Right cardiac atrium (tissue), 5 donors: ENCODE measurements at regions of chr4 and their contacts with region 1.

Region 1: GRCh38 chr4:83252782-83253405 is 31.7 kb downstream of the COQ2 start:
- DNase-seq: peak; percentile 49 to 69 (median 60)
- ATAC-seq: peak; percentile 62 to 76
- H3K4me3 ChIP-seq: no peak overlapping the region
- H3K27ac ChIP-seq: no peak overlapping the region
- H3K4me1 ChIP-seq: no peaks in the 10 kb centered on the region
- H3K27me3 ChIP-seq: no peaks in the 10 kb centered on the region

Region 2: DNA sequence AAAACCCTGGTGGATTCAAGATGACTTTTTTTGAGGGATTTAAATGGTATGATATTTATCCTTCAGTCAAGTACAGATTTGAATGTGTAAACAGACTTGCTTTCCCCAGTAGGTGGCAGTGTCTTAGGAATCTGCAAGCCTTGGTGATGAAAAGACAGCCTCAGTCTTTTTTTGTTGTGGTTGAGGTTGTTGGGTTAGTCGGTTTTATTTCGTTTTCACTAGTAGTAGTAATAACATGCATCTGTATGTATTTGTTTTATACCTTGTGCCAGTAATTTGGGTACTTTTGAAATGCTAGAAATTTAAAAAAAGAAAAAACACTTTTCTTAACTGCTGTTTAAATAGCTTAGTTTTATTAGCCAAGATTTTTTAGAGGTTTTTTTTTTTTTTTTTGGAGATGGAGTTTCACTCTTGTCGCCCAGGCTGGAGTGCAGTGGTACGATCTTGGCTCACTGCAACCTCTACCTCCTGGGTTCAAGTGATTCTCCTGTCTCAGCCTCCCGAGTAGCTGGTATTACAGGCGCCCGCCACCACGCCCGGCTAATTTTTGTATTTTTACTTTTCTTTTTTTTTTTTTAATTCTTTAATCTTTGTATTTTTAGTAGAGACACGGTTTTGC is 178.7 kb before region 1 on chr4:
- intact Hi-C with region 1: loop called in 1 of 4 experiments (anchors 5 kb)
- DNase-seq: no peak
- ATAC-seq: peak; percentile 56 to 71
- H3K4me3 ChIP-seq: no peak overlapping the region
- H3K27ac ChIP-seq: no peak overlapping the region
- H3K4me1 ChIP-seq: no peaks in the 10 kb centered on the region
- H3K27me3 ChIP-seq: no peaks in the 10 kb centered on the region

Region 3: GRCh38 chr4:83083925-83084475 is 168.9 kb before region 1 on chr4:
- intact Hi-C with region 1: loop called in 2 of 4 experiments (anchors 5 to 10 kb)
- DNase-seq: peak in 2 of 3 donors; percentile 44 to 75
- ATAC-seq: peak; percentile 68 to 98
- H3K4me3 ChIP-seq: no peak overlapping the region
- H3K27ac ChIP-seq: peak overlapping the region; percentile 40
- H3K4me1 ChIP-seq: peaks cover 2% of the 10 kb centered on the region
- H3K27me3 ChIP-seq: no peaks in the 10 kb centered on the region

Region 4: DNA sequence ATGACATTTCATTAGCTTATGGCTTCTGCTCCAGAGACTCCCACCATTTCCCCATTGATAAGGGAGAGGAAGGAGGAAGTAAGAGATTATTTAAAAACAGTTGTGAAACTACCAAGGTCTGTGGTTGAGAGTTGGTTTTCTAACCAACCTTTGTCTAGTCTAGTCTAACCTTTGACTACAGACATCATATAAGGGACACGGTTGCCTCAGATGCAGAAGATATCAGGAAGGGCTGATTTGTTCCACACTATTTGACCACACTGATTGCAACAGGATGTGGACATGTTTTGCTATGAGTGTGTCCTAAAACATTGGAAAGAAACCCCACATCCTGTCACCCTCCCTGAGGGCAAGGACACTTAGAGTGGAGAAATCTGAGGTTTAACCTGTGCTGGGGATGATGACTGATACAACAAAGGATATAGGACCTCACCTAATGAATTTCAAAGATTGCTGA is 21.2 kb before region 1 on chr4:
- intact Hi-C with region 1: no loop called
- DNase-seq: no peak
- ATAC-seq: peak in 1 of 2 donors; percentile 49
- H3K4me3 ChIP-seq: no peak overlapping the region
- H3K27ac ChIP-seq: no peak overlapping the region
- H3K4me1 ChIP-seq: no peaks in the 10 kb centered on the region
- H3K27me3 ChIP-seq: no peaks in the 10 kb centered on the region

Region 5: GRCh38 chr4:83340692-83341343 is 87.9 kb after region 1 on chr4:
- intact Hi-C with region 1: no loop called
- DNase-seq: no peak
- ATAC-seq: no peak
- H3K4me3 ChIP-seq: no peak overlapping the region
- H3K27ac ChIP-seq: no peak overlapping the region
- H3K4me1 ChIP-seq: no peaks in the 10 kb centered on the region
- H3K27me3 ChIP-seq: peaks cover 2% of the 10 kb centered on the region

Region 6: GRCh38 chr4:83440899-83441298 is 188.0 kb after region 1 on chr4:
- intact Hi-C with region 1: no loop called
- DNase-seq: no peak
- ATAC-seq: no peak
- H3K4me3 ChIP-seq: no peak overlapping the region
- H3K27ac ChIP-seq: no peak overlapping the region
- H3K4me1 ChIP-seq: no peaks in the 10 kb centered on the region
- H3K27me3 ChIP-seq: no peaks in the 10 kb centered on the region

Region 7: GRCh38 chr4:83658806-83659495 is 406.1 kb after region 1 on chr4:
- intact Hi-C with region 1: no loop called
- DNase-seq: no peak
- ATAC-seq: no peak
- H3K4me3 ChIP-seq: no peak overlapping the region
- H3K27ac ChIP-seq: no peak overlapping the region
- H3K4me1 ChIP-seq: no peaks in the 10 kb centered on the region
- H3K27me3 ChIP-seq: no peaks in the 10 kb centered on the region